ENCODE measurements at regions of chr7 and their contacts with region 1.

Region 1: GRCh38 chr7:143214789-143215679 is 6.8 kb upstream of the TAS2R40 start:
- DNase-seq: peak; percentile 85
- ATAC-seq: peak; percentile 98
- H3K4me3 ChIP-seq: no peak overlapping the region
- H3K27ac ChIP-seq: no peak overlapping the region
- H3K4me1 ChIP-seq: no peaks in the 10 kb centered on the region
- H3K27me3 ChIP-seq: peaks cover 2% of the 10 kb centered on the region; the same call in 1 of the 2 replicates
- CTCF ChIP-seq: peak; percentile 100
- POLR2A ChIP-seq: no peak
- RAD21 ChIP-seq: peak; percentile 94

Region 2: GRCh38 chr7:142338633-142339501 is 876.2 kb before region 1 on chr7:
- CTCF ChIA-PET with region 1: no interaction called
- POLR2A ChIA-PET with region 1: no interaction called
- dilution Hi-C with region 1: no loop called
- in situ Hi-C with region 1: loop called (anchors 25 kb)
- intact Hi-C with region 1: no loop called
- DNase-seq: peak; percentile 14
- ATAC-seq: no peak; the same call in 1 of the 2 replicates
- H3K4me3 ChIP-seq: no peak overlapping the region
- H3K27ac ChIP-seq: no peak overlapping the region
- H3K4me1 ChIP-seq: no peaks in the 10 kb centered on the region
- H3K27me3 ChIP-seq: peaks cover 2% of the 10 kb centered on the region; the same call in 1 of the 2 replicates
- CTCF ChIP-seq: peak; percentile 34
- POLR2A ChIP-seq: no peak
- RAD21 ChIP-seq: peak; percentile 38

Region 3: GRCh38 chr7:142516038-142516501 is 699.0 kb before region 1 on chr7:
- CTCF ChIA-PET with region 1: no interaction called
- POLR2A ChIA-PET with region 1: no interaction called
- dilution Hi-C with region 1: no loop called
- in situ Hi-C with region 1: loop called (anchors 10 kb)
- intact Hi-C with region 1: no loop called
- DNase-seq: peak; percentile 72
- ATAC-seq: peak; percentile 93
- H3K4me3 ChIP-seq: no peak overlapping the region
- H3K27ac ChIP-seq: no peak overlapping the region
- H3K4me1 ChIP-seq: no peaks in the 10 kb centered on the region
- H3K27me3 ChIP-seq: peaks cover 4% of the 10 kb centered on the region
- CTCF ChIP-seq: peak; percentile 86
- POLR2A ChIP-seq: no peak
- RAD21 ChIP-seq: peak; percentile 75

Region 4: DNA sequence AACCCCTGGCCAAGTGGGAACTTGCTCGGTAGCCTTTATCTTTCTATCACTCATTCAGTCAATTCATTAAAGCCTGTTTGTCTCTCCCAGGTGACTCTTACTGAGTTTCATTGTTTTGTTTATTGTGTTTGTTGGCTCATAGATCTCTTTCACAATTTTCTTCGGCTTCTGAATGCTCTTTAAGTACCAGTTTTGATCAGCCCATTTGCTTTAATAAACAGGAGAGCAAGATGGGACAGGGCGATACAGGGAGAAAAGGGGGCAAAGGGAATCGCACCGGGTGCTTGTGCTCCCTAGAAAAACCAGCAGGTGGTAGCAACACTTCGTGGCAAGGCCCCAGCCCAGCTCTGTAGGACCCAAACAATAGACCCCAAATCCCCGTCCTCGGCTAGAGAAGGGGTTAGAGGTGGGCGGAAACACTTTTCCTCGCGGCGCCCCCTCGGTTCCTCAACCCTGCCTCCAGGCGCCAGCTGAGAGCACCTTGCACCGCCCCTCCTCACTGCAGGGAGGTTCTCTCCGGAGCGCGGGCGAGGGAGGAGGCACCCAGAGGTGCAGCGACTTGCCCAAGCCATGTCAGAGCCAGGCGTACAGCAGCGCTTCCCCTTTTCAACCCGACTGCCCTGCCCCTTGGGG is 361.2 kb before region 1 on chr7:
- CTCF ChIA-PET with region 1: interaction called, 3 read pairs
- POLR2A ChIA-PET with region 1: no interaction called
- dilution Hi-C with region 1: no loop called
- in situ Hi-C with region 1: loop called (anchors 10 kb)
- intact Hi-C with region 1: loop called (anchors 1 kb)
- DNase-seq: peak; percentile 39
- ATAC-seq: peak; percentile 68
- H3K4me3 ChIP-seq: peak overlapping the region; percentile 50
- H3K27ac ChIP-seq: no peak overlapping the region
- H3K4me1 ChIP-seq: no peaks in the 10 kb centered on the region
- H3K27me3 ChIP-seq: peaks cover 11% of the 10 kb centered on the region
- CTCF ChIP-seq: peak; percentile 60
- POLR2A ChIP-seq: no peak
- RAD21 ChIP-seq: peak; percentile 58

Region 5: DNA sequence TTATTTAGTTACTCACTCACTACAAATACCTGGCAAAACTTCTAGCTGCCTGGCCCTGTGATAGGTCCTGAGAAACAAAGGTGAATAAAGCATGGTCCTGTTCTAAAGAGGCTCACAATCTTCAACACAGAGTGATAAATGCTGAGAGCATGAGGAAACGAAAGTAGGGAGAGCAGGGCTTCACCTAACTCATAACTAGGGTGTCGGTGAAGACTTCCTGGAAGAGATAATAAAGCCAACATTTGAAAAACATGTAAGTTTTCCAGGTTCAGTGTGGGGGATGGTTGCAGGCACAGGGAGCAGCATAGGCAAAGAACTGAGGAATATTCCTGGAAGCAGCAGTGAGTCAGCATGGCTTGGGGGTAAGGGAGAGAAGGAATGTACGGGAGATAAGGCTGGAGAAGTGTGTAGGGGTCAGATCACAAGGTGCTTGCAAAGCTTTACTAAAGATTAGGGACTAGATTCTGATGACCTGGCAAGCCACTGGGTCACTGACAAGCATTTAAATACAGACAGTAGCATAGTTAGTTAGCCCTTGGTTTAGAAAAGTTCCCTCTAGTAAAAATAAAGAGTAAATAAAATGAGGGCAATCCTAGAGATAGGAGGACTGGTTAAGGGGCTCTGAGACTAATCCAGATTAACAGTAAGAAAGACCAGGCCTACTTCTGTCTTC is 257.9 kb before region 1 on chr7:
- CTCF ChIA-PET with region 1: no interaction called
- POLR2A ChIA-PET with region 1: no interaction called
- dilution Hi-C with region 1: no loop called
- in situ Hi-C with region 1: no loop called
- intact Hi-C with region 1: no loop called
- DNase-seq: no peak
- ATAC-seq: no peak
- H3K4me3 ChIP-seq: no peak overlapping the region
- H3K27ac ChIP-seq: no peak overlapping the region
- H3K4me1 ChIP-seq: no peaks in the 10 kb centered on the region
- H3K27me3 ChIP-seq: no peaks in the 10 kb centered on the region
- CTCF ChIP-seq: no peak
- POLR2A ChIP-seq: no peak
- RAD21 ChIP-seq: no peak

Region 6: GRCh38 chr7:143008007-143008901 is 206.8 kb before region 1 on chr7:
- CTCF ChIA-PET with region 1: interaction called, 69 read pairs
- POLR2A ChIA-PET with region 1: no interaction called
- dilution Hi-C with region 1: no loop called
- in situ Hi-C with region 1: loop called (anchors 5 kb)
- intact Hi-C with region 1: loop called (anchors 1 kb)
- DNase-seq: peak; percentile 41
- ATAC-seq: peak; percentile 99
- H3K4me3 ChIP-seq: no peak overlapping the region
- H3K27ac ChIP-seq: no peak overlapping the region
- H3K4me1 ChIP-seq: no peaks in the 10 kb centered on the region
- H3K27me3 ChIP-seq: peaks cover 2% of the 10 kb centered on the region; the same call in 1 of the 2 replicates
- CTCF ChIP-seq: peak; percentile 89
- POLR2A ChIP-seq: no peak
- RAD21 ChIP-seq: peak; percentile 82

Region 7: GRCh38 chr7:143013893-143014292 is 201.1 kb before region 1 on chr7:
- CTCF ChIA-PET with region 1: interaction called, 69 read pairs
- POLR2A ChIA-PET with region 1: no interaction called
- dilution Hi-C with region 1: no loop called
- in situ Hi-C with region 1: loop called (anchors 5 kb)
- intact Hi-C with region 1: no loop called
- DNase-seq: peak; percentile 53
- ATAC-seq: peak; percentile 42
- H3K4me3 ChIP-seq: no peak overlapping the region
- H3K27ac ChIP-seq: no peak overlapping the region
- H3K4me1 ChIP-seq: no peaks in the 10 kb centered on the region
- H3K27me3 ChIP-seq: no peaks in the 10 kb centered on the region
- CTCF ChIP-seq: no peak
- POLR2A ChIP-seq: no peak
- RAD21 ChIP-seq: no peak

Region 8: GRCh38 chr7:143069912-143070500 is 145.0 kb before region 1 on chr7:
- CTCF ChIA-PET with region 1: no interaction called
- POLR2A ChIA-PET with region 1: no interaction called
- dilution Hi-C with region 1: no loop called
- in situ Hi-C with region 1: no loop called
- intact Hi-C with region 1: no loop called
- DNase-seq: no peak
- ATAC-seq: no peak
- H3K4me3 ChIP-seq: no peak overlapping the region
- H3K27ac ChIP-seq: no peak overlapping the region
- H3K4me1 ChIP-seq: no peaks in the 10 kb centered on the region
- H3K27me3 ChIP-seq: no peaks in the 10 kb centered on the region
- CTCF ChIP-seq: no peak
- POLR2A ChIP-seq: no peak
- RAD21 ChIP-seq: no peak

Region 9: DNA sequence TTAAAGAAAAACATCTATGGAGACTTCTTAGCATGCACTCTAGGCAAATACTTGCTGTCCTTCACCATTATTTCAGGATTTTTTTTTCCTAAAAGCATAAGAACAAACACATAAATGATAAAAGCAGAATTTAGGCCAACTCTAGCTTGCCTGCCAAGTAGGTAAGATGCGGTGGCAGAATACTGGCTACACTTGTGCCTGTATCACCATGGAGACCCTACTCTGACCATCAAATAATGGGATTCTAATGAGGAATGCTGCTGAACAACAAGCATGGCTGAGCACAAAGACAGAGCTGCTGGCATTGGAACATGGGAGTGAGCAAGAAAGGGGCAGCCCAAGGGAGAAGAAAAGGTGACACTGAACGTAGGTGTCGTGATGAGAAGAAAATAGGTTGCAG is 11.6 kb before region 1 on chr7:
- CTCF ChIA-PET with region 1: interaction called, 13 read pairs
- POLR2A ChIA-PET with region 1: no interaction called
- dilution Hi-C with region 1: no loop called
- in situ Hi-C with region 1: no loop called
- intact Hi-C with region 1: no loop called
- DNase-seq: no peak
- ATAC-seq: no peak
- H3K4me3 ChIP-seq: no peak overlapping the region
- H3K27ac ChIP-seq: no peak overlapping the region
- H3K4me1 ChIP-seq: no peaks in the 10 kb centered on the region
- H3K27me3 ChIP-seq: no peaks in the 10 kb centered on the region
- CTCF ChIP-seq: no peak
- POLR2A ChIP-seq: no peak
- RAD21 ChIP-seq: no peak

Measured in IMR-90 (cell line).